H1 (cell line): ENCODE measurements at regions of chr3 and their contacts with region 1.

Region 1: DNA sequence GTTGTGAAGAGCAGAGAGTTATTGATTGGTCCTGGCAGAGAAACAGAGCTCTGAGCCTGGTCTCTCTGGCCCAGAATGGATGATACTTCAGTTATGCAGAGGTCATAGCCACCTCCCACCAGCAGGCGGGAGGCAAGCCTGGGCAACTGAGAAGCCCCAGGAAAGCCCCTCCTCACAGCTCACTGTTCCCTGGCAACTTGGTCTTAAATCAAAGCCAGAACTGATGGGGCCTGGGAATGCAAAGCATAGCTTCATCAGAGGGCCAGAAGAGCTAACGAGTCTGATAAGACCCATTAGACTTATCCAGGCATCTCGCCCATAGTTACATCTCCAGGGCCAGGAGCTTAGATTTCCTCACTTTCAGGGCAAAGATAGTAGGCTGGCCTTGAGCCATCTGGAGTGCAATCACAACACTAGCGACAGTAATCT is 5.5 kb upstream of the COLQ start:
- DNase-seq: peak; percentile 33 to 76
- H3K4me3 ChIP-seq: no peak overlapping the region
- H3K27ac ChIP-seq: no peak overlapping the region
- H3K4me1 ChIP-seq: peaks cover 0 to 6% (median 0%) of the 10 kb centered on the region in 4 experiments; a peak in 1 of 7 replicates
- H3K27me3 ChIP-seq: peaks cover 2 to 17% (median 9%) of the 10 kb centered on the region in 4 experiments
- CTCF ChIP-seq: peak; percentile 64 to 85 (median 77)
- EP300 ChIP-seq: no peak
- POLR2A ChIP-seq: no peak
- RAD21 ChIP-seq: peak; percentile 74 to 80

Region 2: DNA sequence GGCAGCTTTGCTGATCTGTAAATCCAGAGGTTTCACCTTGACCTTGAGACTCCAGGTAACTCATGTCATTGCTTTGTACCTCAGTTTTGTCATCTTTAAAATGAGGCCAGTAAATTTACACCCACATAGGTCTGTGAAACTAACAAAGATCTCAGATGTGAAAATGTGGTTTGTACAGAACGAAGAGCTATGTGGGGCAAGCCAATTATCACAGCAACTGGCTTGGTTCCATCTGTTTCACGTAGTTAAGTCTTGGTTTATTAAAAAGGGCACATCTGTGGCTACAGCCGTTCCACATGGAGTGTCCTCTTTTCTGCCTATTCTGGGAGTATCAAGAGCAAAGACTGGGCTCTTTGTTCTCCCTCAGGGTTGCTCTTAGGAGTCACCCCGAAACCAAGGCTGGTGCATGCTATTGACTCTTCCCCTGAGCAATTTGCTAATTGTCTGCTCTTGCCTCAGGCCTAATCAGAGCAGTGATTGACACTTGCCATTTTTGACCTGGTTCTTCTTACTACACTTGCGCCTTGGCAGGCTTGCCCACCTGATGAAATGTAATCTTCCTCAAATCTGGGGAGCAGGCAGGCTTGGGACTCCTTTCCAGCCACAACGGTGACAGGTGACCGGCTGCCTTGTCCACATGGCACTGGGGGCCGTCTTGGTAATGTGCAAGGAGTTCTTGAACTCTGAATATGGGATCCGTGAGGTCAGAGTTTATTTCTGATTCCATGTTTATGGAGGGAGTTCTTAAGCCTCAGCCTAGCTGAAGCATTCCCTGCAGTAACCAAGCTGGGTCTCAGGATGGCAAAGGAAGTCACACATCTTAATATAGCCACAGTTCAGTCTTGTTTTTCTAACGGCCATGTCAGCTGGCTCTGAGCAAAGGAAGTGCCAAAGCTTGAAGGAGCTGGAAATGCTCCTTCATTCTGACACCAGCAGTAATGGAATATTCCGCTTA is 59.5 kb before region 1 on chr3:
- CTCF ChIA-PET with region 1: interaction called, 15 read pairs
- POLR2A ChIA-PET with region 1: no interaction called
- DNase-seq: no peak
- H3K4me3 ChIP-seq: no peak overlapping the region
- H3K27ac ChIP-seq: no peak overlapping the region
- H3K4me1 ChIP-seq: no peaks in the 10 kb centered on the region
- H3K27me3 ChIP-seq: no peaks in the 10 kb centered on the region
- CTCF ChIP-seq: no peak
- EP300 ChIP-seq: no peak
- POLR2A ChIP-seq: no peak
- RAD21 ChIP-seq: no peak

Region 3: DNA sequence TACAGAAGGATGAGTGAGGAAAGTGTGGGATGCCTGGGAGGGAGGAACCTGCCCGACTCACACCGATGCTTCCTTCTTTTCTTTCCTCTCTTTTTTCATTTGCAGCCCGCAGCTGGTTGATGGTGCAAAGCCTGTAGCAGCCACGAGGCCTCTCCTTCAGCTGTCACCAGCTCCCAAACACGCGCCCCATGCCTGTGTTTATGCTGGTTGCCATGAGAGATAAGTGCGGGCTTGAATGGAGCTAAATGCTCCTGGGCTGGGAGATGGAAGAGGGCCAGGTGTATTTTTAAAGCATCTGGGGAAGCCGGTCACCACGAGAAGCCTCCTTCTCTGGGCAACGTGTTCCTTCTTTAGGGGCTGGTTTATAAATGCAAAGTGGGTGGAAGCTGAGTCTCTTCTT is 14.9 kb before region 1 on chr3:
- CTCF ChIA-PET with region 1: interaction called, 39 read pairs
- POLR2A ChIA-PET with region 1: interaction called, 3 read pairs
- DNase-seq: no peak
- H3K4me3 ChIP-seq: no peak overlapping the region
- H3K27ac ChIP-seq: no peak overlapping the region
- H3K4me1 ChIP-seq: 0 out of 7 replicates have a peak, but pooled peaks cover 0 to 2% (median 0%) of the 10 kb centered on the region in 4 experiments
- H3K27me3 ChIP-seq: no peaks in the 10 kb centered on the region
- CTCF ChIP-seq: no peak
- EP300 ChIP-seq: no peak
- POLR2A ChIP-seq: no peak
- RAD21 ChIP-seq: no peak

Region 4: GRCh38 chr3:15542614-15543013 is 15.6 kb after region 1 on chr3:
- CTCF ChIA-PET with region 1: interaction called, 24 read pairs
- POLR2A ChIA-PET with region 1: interaction called, 3 read pairs
- DNase-seq: no peak
- H3K4me3 ChIP-seq: no peak overlapping the region
- H3K27ac ChIP-seq: no peak overlapping the region
- H3K4me1 ChIP-seq: no peaks in the 10 kb centered on the region
- H3K27me3 ChIP-seq: no peaks in the 10 kb centered on the region
- CTCF ChIP-seq: no peak
- EP300 ChIP-seq: no peak
- POLR2A ChIP-seq: no peak
- RAD21 ChIP-seq: no peak

Region 5: GRCh38 chr3:15557511-15557946 is 30.5 kb after region 1 on chr3:
- CTCF ChIA-PET with region 1: interaction called, 14 read pairs
- POLR2A ChIA-PET with region 1: no interaction called
- DNase-seq: peak in 1 of 2 experiments; percentile 55
- H3K4me3 ChIP-seq: no peak overlapping the region
- H3K27ac ChIP-seq: no peak overlapping the region
- H3K4me1 ChIP-seq: no peaks in the 10 kb centered on the region
- H3K27me3 ChIP-seq: no peaks in the 10 kb centered on the region
- CTCF ChIP-seq: peak in 2 of 3 experiments; percentile 21 to 49; a peak in 2 of 4 replicates
- EP300 ChIP-seq: no peak
- POLR2A ChIP-seq: no peak
- RAD21 ChIP-seq: peak; percentile 51 to 53

Region 6: DNA sequence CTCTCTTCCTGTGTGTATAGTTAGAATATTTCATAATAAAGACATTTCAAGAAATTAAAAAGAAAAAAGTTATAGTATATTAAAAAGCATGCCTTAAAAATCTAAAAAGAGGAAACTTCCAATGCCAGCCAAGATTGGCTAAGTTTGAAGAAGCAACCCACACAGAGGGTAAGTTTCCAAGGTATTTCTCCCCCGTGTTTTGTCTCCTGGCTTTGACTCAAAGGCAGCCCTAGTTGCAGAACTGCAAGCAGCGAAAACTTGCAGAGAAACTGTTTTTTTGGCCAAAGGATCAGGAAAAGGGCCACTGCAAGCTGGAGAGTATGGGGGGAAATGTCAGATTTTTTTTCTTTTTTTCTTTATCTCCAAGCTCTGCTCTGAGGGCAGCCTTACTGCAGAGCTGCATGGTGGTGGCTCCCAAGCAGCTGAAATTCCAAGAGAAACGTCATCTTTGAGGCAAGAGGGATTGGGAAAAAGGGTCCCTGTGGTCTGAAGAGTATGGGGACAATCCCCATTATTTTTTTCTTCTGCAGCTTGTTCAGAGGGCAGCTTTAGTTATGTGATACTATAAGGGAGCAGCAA is 51.3 kb after region 1 on chr3:
- CTCF ChIA-PET with region 1: no interaction called
- POLR2A ChIA-PET with region 1: no interaction called
- DNase-seq: no peak
- H3K4me3 ChIP-seq: no peak overlapping the region
- H3K27ac ChIP-seq: no peak overlapping the region
- H3K4me1 ChIP-seq: no peaks in the 10 kb centered on the region
- H3K27me3 ChIP-seq: no peaks in the 10 kb centered on the region
- CTCF ChIP-seq: no peak
- EP300 ChIP-seq: no peak
- POLR2A ChIP-seq: no peak
- RAD21 ChIP-seq: no peak

Region 7: DNA sequence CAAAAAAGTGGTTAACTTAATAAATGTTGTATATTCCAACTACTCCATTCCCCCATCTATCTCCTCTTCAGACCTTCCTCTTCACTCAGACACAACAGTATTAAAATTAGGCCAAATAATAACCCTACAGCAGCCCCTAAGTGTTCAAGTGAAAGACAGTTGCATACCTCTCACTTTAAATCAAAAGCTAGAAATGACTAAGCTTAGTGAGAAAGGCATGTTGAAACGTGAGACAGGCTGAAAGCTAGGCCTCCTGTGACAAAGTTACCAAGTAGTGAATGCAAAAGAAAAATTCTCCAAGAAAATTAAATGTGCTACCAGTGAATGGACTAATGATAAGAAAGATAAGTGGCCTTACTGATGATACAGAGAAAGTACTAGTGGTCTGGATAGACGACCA is 199.0 kb after region 1 on chr3:
- CTCF ChIA-PET with region 1: no interaction called
- POLR2A ChIA-PET with region 1: no interaction called
- DNase-seq: no peak
- H3K4me3 ChIP-seq: no peak overlapping the region
- H3K27ac ChIP-seq: no peak overlapping the region
- H3K4me1 ChIP-seq: no peaks in the 10 kb centered on the region
- H3K27me3 ChIP-seq: no peaks in the 10 kb centered on the region
- CTCF ChIP-seq: no peak
- EP300 ChIP-seq: no peak
- POLR2A ChIP-seq: no peak
- RAD21 ChIP-seq: no peak

Region 8: DNA sequence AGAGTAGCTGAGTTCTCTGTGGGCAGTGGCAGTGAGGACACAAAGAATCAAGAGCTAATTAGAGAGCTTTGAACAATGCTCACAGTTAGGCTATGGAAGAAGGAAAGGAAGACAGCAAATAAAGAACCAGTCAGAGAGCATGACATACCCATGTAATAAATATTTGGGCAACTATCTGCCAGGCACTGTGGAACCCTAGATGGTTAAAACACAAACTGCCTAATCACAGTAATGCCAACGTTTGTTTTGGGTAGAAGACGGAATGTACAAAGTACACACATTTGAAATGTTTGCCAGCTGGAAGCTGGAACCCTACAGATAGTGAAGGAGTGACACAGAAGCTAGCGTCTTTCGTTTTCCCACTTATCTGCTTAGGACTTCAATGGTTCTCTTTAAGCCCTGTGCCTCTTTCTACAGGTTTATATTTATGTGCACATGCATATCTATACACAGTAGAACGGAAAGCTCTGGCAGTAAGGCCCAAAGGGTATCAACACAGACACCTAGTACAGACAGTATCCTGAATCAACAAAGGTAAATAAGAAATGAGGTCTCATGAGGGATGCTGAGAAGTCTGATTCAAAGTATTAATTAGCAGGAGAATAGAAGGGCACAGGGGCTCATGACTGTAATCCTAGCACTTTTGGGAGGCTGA is 226.1 kb after region 1 on chr3:
- CTCF ChIA-PET with region 1: no interaction called
- POLR2A ChIA-PET with region 1: no interaction called
- DNase-seq: no peak
- H3K4me3 ChIP-seq: no peak overlapping the region
- H3K27ac ChIP-seq: no peak overlapping the region
- H3K4me1 ChIP-seq: peaks cover 0 to 14% (median 10%) of the 10 kb centered on the region in 4 experiments; a peak in 3 of 7 replicates
- H3K27me3 ChIP-seq: no peaks in the 10 kb centered on the region
- CTCF ChIP-seq: no peak
- EP300 ChIP-seq: no peak
- POLR2A ChIP-seq: no peak
- RAD21 ChIP-seq: no peak